ENCODE measurements at regions of chr7 and their contacts with region 1.

Region 1: DNA sequence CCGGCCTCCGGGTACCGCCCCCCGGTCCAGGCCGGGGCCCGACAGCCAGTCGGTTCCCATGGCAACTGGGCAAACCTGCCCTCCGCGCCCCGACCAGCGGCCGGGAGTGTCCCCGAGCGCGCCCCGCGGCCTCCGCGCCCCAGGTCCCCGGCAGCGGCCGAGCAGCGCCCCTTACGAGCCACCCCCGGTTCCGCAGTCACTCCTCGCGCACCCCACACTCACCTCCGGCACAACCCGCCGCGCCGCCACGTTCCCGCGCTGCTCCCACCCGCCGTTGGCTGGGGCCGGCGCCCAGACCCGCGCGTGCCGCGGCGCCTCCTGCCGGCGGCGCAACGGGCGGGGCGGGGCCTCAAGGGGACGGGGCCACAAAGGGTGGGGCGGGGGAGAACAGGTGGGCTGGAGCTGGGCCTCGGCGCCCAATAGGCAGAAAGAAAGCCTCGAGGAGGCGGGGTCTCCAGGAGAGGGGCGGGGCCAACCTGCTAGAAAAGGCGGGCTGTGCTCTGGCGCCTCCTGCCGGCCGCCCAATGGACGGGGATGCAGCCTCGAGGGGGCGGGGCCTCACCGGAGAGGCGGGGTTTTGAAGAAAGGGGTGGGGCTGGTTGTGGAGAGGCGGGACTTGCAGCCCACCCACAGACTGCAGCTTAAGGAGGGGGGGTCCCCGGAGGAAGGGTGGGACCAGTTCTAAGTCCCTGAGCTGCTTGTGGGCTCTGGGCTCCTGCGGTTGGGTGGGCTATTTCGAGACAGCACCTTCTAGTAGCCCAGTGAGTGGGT is at the start of gene RADIL:
- DNase-seq: peak; percentile 90 to 96 (median 95)
- ATAC-seq: peak; percentile 87 to 96 (median 96)
- H3K4me3 ChIP-seq: peak within 1 kb of the TSS; percentile 53 to 83 (median 73)
- H3K27ac ChIP-seq: peak within 1 kb of the TSS; percentile 67 to 93 (median 84)
- H3K4me1 ChIP-seq: peaks cover 0 to 35% (median 10%) of the 10 kb centered on the region in 12 donors
- H3K27me3 ChIP-seq: peaks cover 0 to 24% (median 0%) of the 10 kb centered on the region in 9 donors
- CTCF ChIP-seq: peak; percentile 70 to 97 (median 90)
- POLR2A ChIP-seq: no peak
- total RNA-seq, gene RADIL: 1.1 to 9.0 (median 3.4) TPM

Region 2: DNA sequence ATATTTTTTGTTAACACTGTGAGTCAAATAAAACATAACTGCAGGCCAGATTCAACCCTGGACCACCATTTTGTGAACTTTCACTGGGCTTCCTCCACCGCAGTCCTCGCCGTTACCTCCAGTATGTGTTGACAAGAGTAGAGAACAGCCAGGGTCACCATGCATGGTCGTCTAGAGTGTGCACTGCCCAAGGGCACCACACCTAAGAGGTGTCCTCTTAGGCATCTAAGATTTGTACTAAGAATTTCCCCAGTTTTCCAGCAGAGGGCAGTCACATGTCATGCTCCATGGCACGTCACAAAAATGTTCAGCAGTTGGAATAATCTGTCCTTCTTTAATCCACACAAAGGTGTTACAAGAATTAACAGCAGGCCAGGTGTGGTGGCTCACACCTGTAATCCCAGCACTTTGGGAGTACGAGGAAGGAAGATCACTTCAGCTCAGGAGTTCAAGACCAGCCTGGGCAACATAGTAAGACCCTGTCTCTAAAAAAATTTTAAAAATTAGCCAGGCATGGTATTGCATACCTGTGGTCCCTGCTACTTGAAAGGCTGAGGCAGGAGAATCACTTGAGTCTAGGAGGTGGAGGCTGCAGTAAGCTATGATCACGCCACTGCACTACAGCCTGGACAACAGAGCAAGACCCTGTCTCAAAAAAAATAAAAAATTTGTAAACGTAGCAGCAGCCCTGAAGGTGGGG is 272.6 kb before region 1 on chr7:
- intact Hi-C with region 1: loop called in 2 of 10 experiments (anchors 5 to 10 kb)
- DNase-seq: peak in 3 of 5 donors; percentile 30 to 48 (median 39)
- ATAC-seq: peak in 3 of 4 donors; percentile 54 to 78 (median 74)
- H3K4me3 ChIP-seq: no peak overlapping the region
- H3K27ac ChIP-seq: no peak overlapping the region
- H3K4me1 ChIP-seq: peaks cover 0 to 20% (median 9%) of the 10 kb centered on the region in 12 donors
- H3K27me3 ChIP-seq: no peaks in the 10 kb centered on the region
- CTCF ChIP-seq: peak; percentile 72 to 92 (median 81)
- POLR2A ChIP-seq: no peak

Region 3: GRCh38 chr7:4791738-4792536 is 91.6 kb before region 1 on chr7:
- intact Hi-C with region 1: loop called in 5 of 10 experiments (anchors 2 to 10 kb)
- DNase-seq: peak; percentile 62 to 85 (median 83)
- ATAC-seq: peak; percentile 29 to 74 (median 66)
- H3K4me3 ChIP-seq: peak overlapping the region in 11 of 12 donors; percentile 11 to 62 (median 51)
- H3K27ac ChIP-seq: peak overlapping the region in 6 of 12 donors; percentile 25 to 76 (median 47)
- H3K4me1 ChIP-seq: peaks cover 0 to 10% (median 5%) of the 10 kb centered on the region in 12 donors
- H3K27me3 ChIP-seq: no peaks in the 10 kb centered on the region
- CTCF ChIP-seq: peak; percentile 63 to 96 (median 82)
- POLR2A ChIP-seq: no peak

Region 4: GRCh38 chr7:4830176-4830575 is 53.4 kb before region 1 on chr7:
- intact Hi-C with region 1: loop called in 7 of 10 experiments (anchors 1 to 10 kb)
- DNase-seq: peak; percentile 58 to 84 (median 66)
- ATAC-seq: peak; percentile 40 to 88 (median 82)
- H3K4me3 ChIP-seq: no peak overlapping the region
- H3K27ac ChIP-seq: no peak overlapping the region
- H3K4me1 ChIP-seq: peaks cover 0 to 5% (median 0%) of the 10 kb centered on the region in 12 donors
- H3K27me3 ChIP-seq: no peaks in the 10 kb centered on the region
- CTCF ChIP-seq: peak; percentile 59 to 86 (median 74)
- POLR2A ChIP-seq: no peak

Region 5: GRCh38 chr7:4849369-4849768 is 34.2 kb before region 1 on chr7:
- intact Hi-C with region 1: loop called in 3 of 10 experiments (anchors 5 kb)
- DNase-seq: no peak
- ATAC-seq: no peak
- H3K4me3 ChIP-seq: no peak overlapping the region
- H3K27ac ChIP-seq: no peak overlapping the region
- H3K4me1 ChIP-seq: peaks cover 0 to 4% (median 0%) of the 10 kb centered on the region in 12 donors
- H3K27me3 ChIP-seq: peaks cover 0 to 4% (median 0%) of the 10 kb centered on the region in 9 donors
- CTCF ChIP-seq: peak in 7 of 12 donors; percentile 7 to 36 (median 24)
- POLR2A ChIP-seq: no peak